Caco-2 (cell line): ENCODE measurements at regions of chr1 and their contacts with region 1.

Region 1: GRCh38 chr1:22673486-22674409 is 20.7 kb downstream of the C1QB start:
- DNase-seq: peak in 1 of 2 experiments; percentile 64
- H3K4me3 ChIP-seq: no peak overlapping the region
- H3K4me3 Mint-ChIP-seq: no peak overlapping the region
- H3K27ac Mint-ChIP-seq: no peak overlapping the region
- H3K4me1 ChIP-seq: no peaks in the 10 kb centered on the region
- H3K4me1 Mint-ChIP-seq: no peaks in the 10 kb centered on the region
- H3K27me3 ChIP-seq: no peaks in the 10 kb centered on the region
- H3K27me3 Mint-ChIP-seq: peaks cover 3% of the 10 kb centered on the region
- CTCF ChIP-seq: peak; percentile 73

Region 2: DNA sequence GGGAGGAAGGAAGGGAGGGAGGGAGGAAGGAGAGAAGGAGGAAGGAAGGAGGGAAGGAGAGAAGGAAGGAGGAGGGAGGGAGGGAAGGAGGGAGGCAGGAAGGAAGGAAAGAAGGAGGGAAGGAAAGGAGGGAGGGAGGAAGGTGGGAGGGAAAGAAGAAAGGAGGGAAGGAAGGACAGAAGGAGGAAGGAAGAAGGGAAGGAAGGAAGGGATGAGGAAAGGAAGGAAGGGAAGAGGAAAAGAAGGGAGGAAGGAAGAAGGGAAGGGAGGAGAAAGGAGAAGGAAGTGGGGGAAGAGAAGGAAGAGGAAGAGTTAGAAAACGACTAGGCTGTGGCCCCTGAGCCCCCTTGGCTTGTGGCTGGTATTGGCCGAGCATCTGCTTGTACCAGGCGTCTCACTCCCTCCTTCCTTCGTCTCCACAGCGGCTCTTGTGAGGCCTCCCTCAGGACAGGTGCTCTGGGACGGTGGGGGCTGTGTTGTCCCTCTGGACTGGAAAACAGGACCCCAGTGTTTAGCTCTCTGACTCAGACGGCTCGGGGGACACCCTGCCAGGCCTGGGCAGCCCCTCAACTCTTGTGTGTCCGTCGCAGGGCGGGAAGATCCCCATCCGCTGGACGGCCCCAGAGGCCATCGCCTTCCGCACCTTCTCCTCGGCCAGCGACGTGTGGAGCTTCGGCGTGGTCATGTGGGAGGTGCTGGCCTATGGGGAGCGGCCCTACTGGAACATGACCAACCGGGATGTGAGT is 73.5 kb before region 1 on chr1:
- CTCF ChIA-PET with region 1: no interaction called
- POLR2A ChIA-PET with region 1: no interaction called
- intact Hi-C with region 1: no loop called
- DNase-seq: peak; percentile 33 to 51
- H3K4me3 ChIP-seq: no peak overlapping the region
- H3K4me3 Mint-ChIP-seq: no peak overlapping the region
- H3K27ac Mint-ChIP-seq: no peak overlapping the region
- H3K4me1 ChIP-seq: no peaks in the 10 kb centered on the region
- H3K4me1 Mint-ChIP-seq: no peaks in the 10 kb centered on the region
- H3K27me3 ChIP-seq: no peaks in the 10 kb centered on the region
- H3K27me3 Mint-ChIP-seq: peaks cover 29% of the 10 kb centered on the region
- CTCF ChIP-seq: no peak

Region 3: DNA sequence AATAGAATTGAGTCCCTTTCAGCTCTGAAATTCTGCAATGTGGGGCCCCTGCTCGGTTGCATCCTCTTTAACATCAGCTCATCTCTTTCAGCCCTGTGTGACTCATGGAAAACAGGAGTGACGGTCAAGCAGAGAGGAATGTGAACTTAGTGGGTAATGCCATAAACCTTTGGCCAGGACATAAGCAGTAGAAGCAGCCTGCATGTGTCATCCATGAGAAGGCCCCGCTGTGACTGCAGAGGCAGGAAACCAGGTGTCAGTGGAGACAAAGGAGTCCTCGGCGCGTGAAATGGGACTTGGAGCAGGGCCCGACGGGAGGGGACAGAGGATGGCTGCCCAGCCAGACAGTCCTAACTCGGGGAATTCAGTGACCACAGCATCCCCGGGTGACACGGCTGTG is 15.8 kb after region 1 on chr1:
- CTCF ChIA-PET with region 1: interaction called, 6 read pairs
- POLR2A ChIA-PET with region 1: interaction called, 3 read pairs
- intact Hi-C with region 1: loop called (anchors 1 kb)
- DNase-seq: peak; percentile 78 to 86
- H3K4me3 ChIP-seq: no peak overlapping the region
- H3K4me3 Mint-ChIP-seq: no peak overlapping the region
- H3K27ac Mint-ChIP-seq: peak overlapping the region; percentile 82
- H3K4me1 ChIP-seq: peaks cover 5% of the 10 kb centered on the region; the same call in 1 of the 2 replicates
- H3K4me1 Mint-ChIP-seq: peaks cover 22% of the 10 kb centered on the region
- H3K27me3 ChIP-seq: no peaks in the 10 kb centered on the region
- H3K27me3 Mint-ChIP-seq: no peaks in the 10 kb centered on the region
- CTCF ChIP-seq: peak in 1 of 2 experiments; percentile 20

Region 4: GRCh38 chr1:22731924-22732720 is 58.4 kb after region 1 on chr1:
- CTCF ChIA-PET with region 1: interaction called, 4 read pairs
- POLR2A ChIA-PET with region 1: no interaction called
- intact Hi-C with region 1: loop called (anchors 1 kb)
- DNase-seq: peak in 1 of 2 experiments; percentile 43
- H3K4me3 ChIP-seq: no peak overlapping the region
- H3K4me3 Mint-ChIP-seq: no peak overlapping the region
- H3K27ac Mint-ChIP-seq: no peak overlapping the region
- H3K4me1 ChIP-seq: peaks cover 4% of the 10 kb centered on the region; the same call in 1 of the 2 replicates
- H3K4me1 Mint-ChIP-seq: no peaks in the 10 kb centered on the region
- H3K27me3 ChIP-seq: no peaks in the 10 kb centered on the region
- H3K27me3 Mint-ChIP-seq: no peaks in the 10 kb centered on the region
- CTCF ChIP-seq: peak; percentile 47 to 63

Region 5: GRCh38 chr1:22889213-22889827 is 215.6 kb after region 1 on chr1:
- CTCF ChIA-PET with region 1: interaction called, 8 read pairs
- POLR2A ChIA-PET with region 1: no interaction called
- intact Hi-C with region 1: loop called (anchors 1 kb)
- DNase-seq: peak in 1 of 2 experiments; percentile 23
- H3K4me3 ChIP-seq: no peak overlapping the region
- H3K4me3 Mint-ChIP-seq: no peak overlapping the region
- H3K27ac Mint-ChIP-seq: no peak overlapping the region
- H3K4me1 ChIP-seq: no peaks in the 10 kb centered on the region
- H3K4me1 Mint-ChIP-seq: no peaks in the 10 kb centered on the region
- H3K27me3 ChIP-seq: no peaks in the 10 kb centered on the region
- H3K27me3 Mint-ChIP-seq: no peaks in the 10 kb centered on the region
- CTCF ChIP-seq: peak; percentile 58 to 86

Region 6: DNA sequence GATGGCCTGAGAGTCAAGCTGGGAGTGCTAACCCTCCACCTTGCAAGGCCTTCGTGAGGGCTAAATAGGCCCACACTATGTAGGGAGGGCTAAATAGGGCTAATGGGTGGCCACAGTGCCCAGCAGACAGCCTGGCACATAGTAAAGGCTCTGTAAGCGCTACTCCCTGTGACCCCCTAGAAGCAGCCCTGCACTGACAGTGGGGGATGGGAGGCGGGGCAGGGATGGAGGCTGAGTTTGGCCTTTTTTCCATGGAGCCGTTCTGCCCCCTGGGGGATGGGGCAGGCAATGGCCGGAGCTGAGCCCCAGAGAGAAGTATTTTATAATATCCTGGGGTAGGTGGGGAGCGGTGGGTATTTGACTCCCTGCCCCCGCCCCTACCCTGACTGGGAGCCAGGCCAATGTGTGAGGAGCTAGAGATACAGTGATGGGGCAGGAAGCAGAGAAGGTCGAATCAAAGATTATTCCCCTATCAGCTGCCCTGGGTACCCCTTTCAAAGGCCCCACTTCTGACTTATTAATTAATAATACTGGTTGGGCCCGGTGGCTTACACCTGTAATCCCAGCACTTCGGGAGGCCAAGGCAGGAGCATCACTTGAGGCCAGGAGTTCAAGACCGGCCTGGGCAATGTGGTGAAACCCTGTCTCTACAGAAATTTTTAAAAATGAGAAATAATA is 256.6 kb after region 1 on chr1:
- CTCF ChIA-PET with region 1: interaction called, 3 read pairs
- POLR2A ChIA-PET with region 1: no interaction called
- intact Hi-C with region 1: loop called (anchors 1 kb)
- DNase-seq: peak in 1 of 2 experiments; percentile 64
- H3K4me3 ChIP-seq: no peak overlapping the region
- H3K4me3 Mint-ChIP-seq: no peak overlapping the region
- H3K27ac Mint-ChIP-seq: no peak overlapping the region
- H3K4me1 ChIP-seq: no peaks in the 10 kb centered on the region
- H3K4me1 Mint-ChIP-seq: no peaks in the 10 kb centered on the region
- H3K27me3 ChIP-seq: no peaks in the 10 kb centered on the region
- H3K27me3 Mint-ChIP-seq: peaks cover 9% of the 10 kb centered on the region
- CTCF ChIP-seq: peak; percentile 61 to 70

Region 7: GRCh38 chr1:22969304-22969709 is 295.6 kb after region 1 on chr1:
- CTCF ChIA-PET with region 1: no interaction called
- POLR2A ChIA-PET with region 1: no interaction called
- intact Hi-C with region 1: loop called (anchors 1 kb)
- DNase-seq: no peak
- H3K4me3 ChIP-seq: no peak overlapping the region
- H3K4me3 Mint-ChIP-seq: no peak overlapping the region
- H3K27ac Mint-ChIP-seq: no peak overlapping the region
- H3K4me1 ChIP-seq: no peaks in the 10 kb centered on the region
- H3K4me1 Mint-ChIP-seq: no peaks in the 10 kb centered on the region
- H3K27me3 ChIP-seq: no peaks in the 10 kb centered on the region
- H3K27me3 Mint-ChIP-seq: peaks cover 9% of the 10 kb centered on the region
- CTCF ChIP-seq: no peak

Region 8: GRCh38 chr1:23216771-23217420 is 543.1 kb after region 1 on chr1:
- CTCF ChIA-PET with region 1: no interaction called
- POLR2A ChIA-PET with region 1: no interaction called
- intact Hi-C with region 1: no loop called
- DNase-seq: peak in 1 of 2 experiments; percentile 63
- H3K4me3 ChIP-seq: peak overlapping the region; percentile 71
- H3K4me3 Mint-ChIP-seq: peak overlapping the region; percentile 68
- H3K27ac Mint-ChIP-seq: no peak overlapping the region
- H3K4me1 ChIP-seq: peaks cover 4% of the 10 kb centered on the region
- H3K4me1 Mint-ChIP-seq: peaks cover 6% of the 10 kb centered on the region
- H3K27me3 ChIP-seq: no peaks in the 10 kb centered on the region
- H3K27me3 Mint-ChIP-seq: no peaks in the 10 kb centered on the region
- CTCF ChIP-seq: peak; percentile 60 to 80